Left ventricle myocardium superior (tissue), 1 donor: ENCODE measurements at regions of chr12 and their contacts with region 1.

Region 1: DNA sequence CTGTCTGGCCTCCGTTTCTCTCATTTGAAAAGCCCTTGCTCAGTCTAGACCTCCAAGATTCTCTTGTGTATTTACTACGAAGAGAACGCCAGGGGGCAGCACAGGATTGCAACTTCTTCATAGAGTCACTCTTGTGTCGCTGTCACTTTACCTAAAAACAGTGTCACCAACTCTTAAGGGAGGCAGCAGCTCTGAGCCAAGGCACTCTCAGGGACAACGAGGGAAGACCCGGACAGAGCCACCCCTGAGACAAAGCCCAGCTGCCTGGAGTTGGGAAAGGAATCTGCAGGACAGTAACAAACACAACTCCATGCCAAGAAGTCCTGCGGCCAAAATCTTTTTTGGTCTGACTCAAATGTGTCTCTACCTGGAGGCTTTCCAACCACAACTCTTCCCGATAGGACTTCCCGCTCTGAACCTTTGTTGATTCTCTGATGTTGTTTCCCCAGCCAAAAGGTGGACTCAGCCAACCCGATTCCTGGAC is 9.6 kb upstream of the RPAP3 start:
- DNase-seq: peak; percentile 77
- ATAC-seq: peak; percentile 60

Region 2: GRCh38 chr12:47527816-47528215 is 187.6 kb before region 1 on chr12:
- intact Hi-C with region 1: no loop called
- DNase-seq: no peak
- ATAC-seq: no peak

Region 3: DNA sequence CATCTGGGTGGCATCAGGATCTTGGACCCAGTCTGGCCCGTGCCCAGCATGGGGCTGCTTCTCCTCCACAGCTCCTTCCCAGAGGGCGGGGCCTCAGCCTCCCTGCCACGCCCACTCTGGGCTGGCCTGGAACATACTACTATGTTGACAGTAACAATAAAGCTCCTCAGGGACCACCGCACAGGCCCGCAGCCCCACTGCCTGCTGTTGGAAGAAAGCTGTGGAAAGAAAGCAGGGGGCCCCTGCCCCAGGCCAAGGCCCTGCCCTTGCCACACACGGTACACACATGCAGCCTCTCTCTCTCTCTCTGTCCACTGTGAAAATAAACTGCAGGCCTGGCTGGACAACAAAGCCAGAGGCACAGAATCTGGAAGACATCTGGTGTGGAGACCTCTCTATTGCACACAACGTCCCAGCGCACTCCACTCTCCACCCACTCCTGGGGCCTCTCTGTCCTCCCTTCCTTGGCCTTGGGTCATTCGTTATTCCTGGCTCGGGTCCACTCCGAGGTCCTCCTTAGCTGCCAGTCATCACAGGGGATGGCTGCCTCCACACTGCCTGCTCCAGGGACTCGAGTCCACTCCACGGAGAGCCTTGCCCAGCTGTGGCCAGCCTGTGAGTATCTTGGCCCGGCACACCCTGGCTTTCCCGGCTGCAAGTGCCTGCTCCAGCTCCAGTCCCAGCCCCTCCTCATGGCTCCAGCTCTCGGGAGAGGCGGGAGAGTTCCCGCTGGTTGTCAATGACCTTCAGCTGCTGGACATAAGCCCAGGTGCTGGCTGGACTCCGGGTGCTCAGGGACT is 21.6 kb after region 1 on chr12:
- intact Hi-C with region 1: loop called (anchors 2 kb)
- DNase-seq: peak; percentile 94
- ATAC-seq: peak; percentile 83

Region 4: DNA sequence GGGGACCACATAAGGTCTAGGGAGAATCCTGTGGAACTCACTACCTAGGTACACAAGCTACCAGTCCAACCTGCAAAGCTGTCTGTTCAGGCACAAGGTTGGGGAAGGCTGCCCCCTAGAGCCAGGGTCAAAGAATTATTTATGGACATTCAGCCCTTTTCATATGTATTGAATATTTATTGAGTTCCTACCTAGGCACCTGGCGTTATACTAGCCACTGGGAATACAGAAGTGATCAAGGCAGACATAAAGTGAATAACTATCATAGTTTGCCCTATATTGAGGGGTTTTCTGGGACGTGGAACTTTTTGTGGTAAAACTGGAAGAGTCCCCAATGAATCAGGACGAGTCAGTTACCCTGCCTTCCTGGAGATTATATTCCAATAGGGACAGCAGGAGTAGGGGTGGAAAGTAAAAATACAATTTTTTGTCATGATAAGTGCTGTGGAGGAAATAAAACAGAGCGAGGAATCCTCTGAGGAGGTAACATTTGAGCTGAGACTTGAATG is 51.8 kb after region 1 on chr12:
- intact Hi-C with region 1: loop called (anchors 5 kb)
- DNase-seq: no peak
- ATAC-seq: peak; percentile 49

Region 5: DNA sequence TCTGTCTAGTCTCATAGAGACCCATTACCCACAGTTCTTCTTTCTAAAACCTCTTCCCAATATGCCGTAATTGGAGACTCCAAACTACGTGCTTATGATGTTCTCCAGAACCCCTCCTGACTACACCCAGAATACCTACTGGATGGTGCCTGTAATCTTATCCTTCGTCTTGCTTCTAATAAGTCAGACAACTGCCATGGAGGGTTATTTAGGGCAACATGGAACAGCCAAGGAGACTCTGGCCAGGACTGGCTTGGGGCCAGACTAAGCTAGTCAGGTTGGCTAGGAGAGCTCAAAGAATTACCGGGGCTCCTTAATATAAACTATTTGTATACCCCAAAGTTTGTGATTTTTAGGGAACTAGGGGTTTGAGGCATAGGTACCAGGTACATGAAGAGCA is 410.6 kb after region 1 on chr12:
- intact Hi-C with region 1: no loop called
- DNase-seq: peak; percentile 82
- ATAC-seq: peak; percentile 90